Cardiac septum (tissue), 1 donor: ENCODE measurements at regions of chr20 and their contacts with region 1.

Region 1: DNA sequence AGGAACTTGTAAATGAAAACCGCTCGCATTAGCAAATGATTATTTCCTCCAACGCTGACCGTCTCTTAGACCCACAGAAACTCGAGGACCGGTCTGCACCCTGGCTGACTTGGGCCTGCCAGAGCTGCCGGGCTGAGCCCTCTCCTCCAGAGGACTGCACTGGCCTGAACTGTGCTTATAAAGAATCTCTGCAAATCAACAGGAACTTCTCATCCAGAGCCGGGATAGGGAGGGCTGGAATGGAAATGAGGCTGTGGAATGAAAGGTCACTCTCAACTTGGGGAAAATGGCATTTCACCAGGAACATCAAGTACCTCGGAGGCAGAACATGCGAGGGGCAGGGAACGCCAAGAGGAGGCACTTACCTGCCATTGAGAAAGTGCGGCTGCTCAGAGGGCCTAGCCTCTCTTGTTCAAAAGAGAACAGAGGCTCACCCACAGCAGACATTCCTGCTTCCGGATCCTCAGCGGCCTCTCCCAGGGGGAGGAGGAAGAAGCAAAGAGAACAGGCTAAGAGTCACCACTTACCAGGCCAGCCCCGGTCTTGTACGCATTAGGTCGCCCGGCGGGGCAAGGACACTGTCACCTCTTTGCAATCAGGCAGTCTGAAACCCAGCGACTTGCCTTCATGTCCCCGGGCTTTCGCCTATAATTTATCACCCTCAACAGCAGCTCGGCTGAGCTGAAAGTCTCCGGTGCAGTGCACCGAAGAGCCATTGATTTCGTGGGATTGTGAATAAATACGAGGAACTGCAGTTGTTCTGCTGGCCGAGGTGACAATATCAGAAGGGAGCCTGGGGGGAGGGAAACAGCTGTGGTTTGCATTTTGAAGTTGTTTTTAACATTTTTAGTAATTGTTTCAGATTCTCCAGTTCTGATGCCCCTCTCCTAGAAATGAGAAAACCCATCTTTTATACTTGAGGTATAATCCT is 37.6 kb downstream of the ZMYND8 start:
- DNase-seq: peak; percentile 87

Region 2: GRCh38 chr20:47334022-47334551 is 15.2 kb after region 1 on chr20:
- intact Hi-C with region 1: loop called (anchors 2 kb)
- DNase-seq: no peak

Region 3: DNA sequence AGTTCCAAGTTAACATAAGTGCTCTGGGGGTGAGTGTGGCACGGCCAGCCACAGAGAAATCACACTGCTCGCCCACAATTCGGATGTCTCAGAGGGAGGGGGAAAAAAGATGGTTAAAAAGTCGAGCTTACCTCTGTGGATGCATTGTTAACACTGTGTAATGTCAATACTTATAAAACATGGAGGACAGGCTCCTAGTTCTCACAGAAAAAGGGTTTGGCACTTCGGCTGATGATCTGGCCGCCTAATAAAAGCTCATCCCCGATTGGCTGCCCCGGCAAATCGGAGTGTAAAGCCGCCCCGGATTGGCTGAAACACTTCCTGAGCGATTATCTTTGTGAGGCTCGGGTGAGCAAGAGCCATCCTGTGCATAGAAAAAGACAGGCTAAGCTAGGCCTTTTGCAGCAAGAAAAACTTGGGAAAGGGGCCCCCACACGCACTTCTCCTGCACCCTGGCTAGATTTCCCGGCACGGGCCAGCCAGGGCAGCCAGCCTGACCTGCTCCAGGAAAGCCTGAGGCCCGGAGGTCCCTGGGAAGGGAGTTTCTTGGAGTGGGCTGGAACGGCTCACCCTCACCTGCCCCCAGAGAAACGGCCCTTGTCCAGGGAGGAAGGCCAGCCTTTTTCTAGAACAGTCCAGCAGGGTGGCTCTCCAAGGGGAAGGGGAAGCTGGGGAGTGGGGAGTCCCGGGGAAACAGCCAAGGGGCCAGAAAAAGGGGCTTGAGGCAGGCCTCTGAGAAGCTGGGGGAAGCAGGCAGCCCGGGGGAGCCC is 37.9 kb after region 1 on chr20 and contains the start of gene ZMYND8:
- intact Hi-C with region 1: loop called (anchors 1 kb)
- DNase-seq: peak; percentile 96
- total RNA-seq, gene ZMYND8: 25.7 TPM